ENCODE measurements at regions of chr17 and their contacts with region 1.

Region 1: DNA sequence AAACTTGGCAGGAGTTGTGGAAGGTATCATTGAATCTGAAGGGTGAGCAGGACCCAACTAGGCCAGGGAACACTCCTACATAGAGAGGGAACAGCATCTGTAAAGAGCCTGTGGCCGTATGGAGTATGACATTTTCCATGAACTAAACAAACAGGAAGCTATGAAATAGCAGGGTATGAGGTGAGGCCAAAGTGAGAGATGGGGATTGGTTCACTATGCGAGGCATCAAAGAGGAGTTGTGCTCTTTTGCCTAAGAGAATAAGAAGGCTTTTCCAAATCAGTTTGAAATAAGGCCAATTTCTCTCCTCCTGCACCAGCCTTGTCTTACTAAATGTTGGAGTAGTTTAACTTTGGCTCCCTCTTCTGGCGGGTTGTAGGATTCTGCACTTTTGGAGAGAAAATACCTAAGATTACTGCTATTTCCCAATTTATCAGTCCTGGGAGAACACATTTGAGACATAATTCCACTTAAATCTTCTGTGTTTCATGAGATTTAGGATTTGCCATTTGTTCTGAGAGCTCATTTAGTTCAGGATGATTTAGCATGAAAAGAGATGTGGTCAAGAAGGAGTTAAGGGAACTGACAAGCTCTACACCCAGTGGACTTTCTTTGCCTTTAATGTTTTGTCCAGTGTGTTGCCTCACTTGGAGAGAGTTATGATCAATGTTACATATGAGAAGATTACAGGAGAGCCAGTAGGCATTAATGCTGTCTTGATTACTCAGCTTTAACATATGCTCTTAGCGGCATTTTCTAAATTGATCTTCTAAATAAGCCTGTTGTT is 55.4 kb downstream of the TNRC6C start:
- DNase-seq: peak; percentile 27 to 82 (median 53)
- ATAC-seq: peak; percentile 65
- H3K4me3 ChIP-seq: no peak overlapping the region
- H3K4me3 Mint-ChIP-seq: no peak overlapping the region
- H3K27ac ChIP-seq: peak overlapping the region in 1 of 2 experiments; percentile 30
- H3K27ac Mint-ChIP-seq: peak overlapping the region; percentile 46
- H3K4me1 ChIP-seq: peaks cover 12% of the 10 kb centered on the region
- H3K4me1 Mint-ChIP-seq: peaks cover 36% of the 10 kb centered on the region
- H3K27me3 ChIP-seq: no peaks in the 10 kb centered on the region
- H3K27me3 Mint-ChIP-seq: no peaks in the 10 kb centered on the region
- CTCF ChIP-seq: peak; percentile 82

Region 2: GRCh38 chr17:77542551-77543490 is 471.1 kb before region 1 on chr17:
- CTCF ChIA-PET with region 1: interaction called, 74 read pairs
- POLR2A ChIA-PET with region 1: interaction called, 8 read pairs
- intact Hi-C with region 1: loop called (anchors 1 kb)
- DNase-seq: peak; percentile 32 to 78 (median 63)
- ATAC-seq: peak; percentile 83
- H3K4me3 ChIP-seq: no peak overlapping the region
- H3K4me3 Mint-ChIP-seq: no peak overlapping the region
- H3K27ac ChIP-seq: no peak overlapping the region
- H3K27ac Mint-ChIP-seq: no peak overlapping the region
- H3K4me1 ChIP-seq: no peaks in the 10 kb centered on the region
- H3K4me1 Mint-ChIP-seq: no peaks in the 10 kb centered on the region
- H3K27me3 ChIP-seq: no peaks in the 10 kb centered on the region
- H3K27me3 Mint-ChIP-seq: peaks cover 3% of the 10 kb centered on the region
- CTCF ChIP-seq: peak; percentile 84

Region 3: GRCh38 chr17:77645072-77646045 is 368.5 kb before region 1 on chr17:
- CTCF ChIA-PET with region 1: interaction called, 16 read pairs
- POLR2A ChIA-PET with region 1: no interaction called
- intact Hi-C with region 1: loop called (anchors 1 kb)
- DNase-seq: peak; percentile 26 to 84 (median 72)
- ATAC-seq: peak; percentile 86
- H3K4me3 ChIP-seq: peak overlapping the region; percentile 46 to 48
- H3K4me3 Mint-ChIP-seq: peak overlapping the region; percentile 82
- H3K27ac ChIP-seq: peak overlapping the region; percentile 24 to 33
- H3K27ac Mint-ChIP-seq: peak overlapping the region; percentile 92
- H3K4me1 ChIP-seq: peaks cover 22% of the 10 kb centered on the region
- H3K4me1 Mint-ChIP-seq: peaks cover 24% of the 10 kb centered on the region
- H3K27me3 ChIP-seq: no peaks in the 10 kb centered on the region
- H3K27me3 Mint-ChIP-seq: no peaks in the 10 kb centered on the region
- CTCF ChIP-seq: peak; percentile 54

Region 4: DNA sequence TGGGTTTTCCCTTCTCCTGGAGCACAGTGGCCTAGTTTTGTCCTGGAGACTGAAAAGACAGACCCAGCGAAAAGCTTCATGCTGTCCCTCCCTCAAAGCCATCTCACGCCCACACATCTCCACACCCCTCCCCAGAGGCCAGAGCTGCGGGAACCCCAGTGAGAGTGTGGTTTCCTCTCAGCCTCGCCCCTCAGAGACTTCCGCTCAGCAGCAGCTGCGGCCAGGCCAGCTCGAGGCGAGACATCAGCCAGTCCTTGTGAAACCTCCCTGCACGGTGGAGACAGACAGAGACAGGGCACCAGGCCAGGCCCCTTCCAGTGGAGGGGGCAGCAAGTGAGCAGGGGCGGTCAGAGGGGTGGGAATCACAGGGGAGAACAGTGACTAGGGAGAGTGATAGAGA is 132.3 kb before region 1 on chr17:
- CTCF ChIA-PET with region 1: interaction called, 10 read pairs
- POLR2A ChIA-PET with region 1: no interaction called
- intact Hi-C with region 1: no loop called
- DNase-seq: peak; percentile 57 to 93 (median 76)
- ATAC-seq: peak; percentile 13
- H3K4me3 ChIP-seq: peak overlapping the region; percentile 44
- H3K4me3 Mint-ChIP-seq: peak overlapping the region; percentile 79
- H3K27ac ChIP-seq: peak overlapping the region; percentile 80 to 98
- H3K27ac Mint-ChIP-seq: peak overlapping the region; percentile 98
- H3K4me1 ChIP-seq: peaks cover 83% of the 10 kb centered on the region
- H3K4me1 Mint-ChIP-seq: peaks cover 92% of the 10 kb centered on the region
- H3K27me3 ChIP-seq: no peaks in the 10 kb centered on the region
- H3K27me3 Mint-ChIP-seq: no peaks in the 10 kb centered on the region
- CTCF ChIP-seq: no peak

Region 5: DNA sequence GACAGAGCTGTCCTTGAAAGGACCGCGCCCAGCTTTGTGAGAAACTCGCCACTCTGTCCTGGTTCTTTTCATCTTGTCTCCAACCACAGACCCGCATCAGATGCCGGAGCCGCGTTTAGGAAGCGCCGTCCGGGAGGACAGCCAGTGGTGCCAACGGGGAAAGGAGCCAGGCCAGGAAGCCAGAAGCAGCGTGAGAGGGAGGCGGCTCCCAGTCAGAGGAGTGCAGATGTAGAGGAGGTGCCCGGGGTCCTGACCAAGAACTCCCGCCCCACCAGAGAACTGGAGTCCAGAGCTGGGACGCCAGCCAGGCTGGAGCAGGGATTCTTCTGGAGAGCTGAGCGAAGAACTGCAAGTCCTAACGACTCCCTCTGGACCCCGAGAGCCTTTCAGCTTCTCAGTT is 104.6 kb before region 1 on chr17:
- CTCF ChIA-PET with region 1: no interaction called
- POLR2A ChIA-PET with region 1: no interaction called
- intact Hi-C with region 1: no loop called
- DNase-seq: no peak
- ATAC-seq: no peak
- H3K4me3 ChIP-seq: no peak overlapping the region
- H3K4me3 Mint-ChIP-seq: no peak overlapping the region
- H3K27ac ChIP-seq: no peak overlapping the region
- H3K27ac Mint-ChIP-seq: no peak overlapping the region
- H3K4me1 ChIP-seq: no peaks in the 10 kb centered on the region
- H3K4me1 Mint-ChIP-seq: no peaks in the 10 kb centered on the region
- H3K27me3 ChIP-seq: peaks cover 0 to under 1% of the 10 kb centered on the region in 2 experiments
- H3K27me3 Mint-ChIP-seq: peaks cover 1% of the 10 kb centered on the region
- CTCF ChIP-seq: no peak

Region 6: GRCh38 chr17:77963441-77963840 is 50.4 kb before region 1 on chr17:
- CTCF ChIA-PET with region 1: interaction called, 35 read pairs
- POLR2A ChIA-PET with region 1: interaction called, 24 read pairs
- intact Hi-C with region 1: loop called (anchors 2 kb)
- DNase-seq: peak; percentile 13 to 90 (median 67)
- ATAC-seq: peak; percentile 53
- H3K4me3 ChIP-seq: peak overlapping the region; percentile 2 to 23
- H3K4me3 Mint-ChIP-seq: peak overlapping the region; percentile 71
- H3K27ac ChIP-seq: no peak overlapping the region
- H3K27ac Mint-ChIP-seq: peak overlapping the region; percentile 56
- H3K4me1 ChIP-seq: peaks cover 75% of the 10 kb centered on the region
- H3K4me1 Mint-ChIP-seq: peaks cover 74% of the 10 kb centered on the region
- H3K27me3 ChIP-seq: no peaks in the 10 kb centered on the region
- H3K27me3 Mint-ChIP-seq: no peaks in the 10 kb centered on the region
- CTCF ChIP-seq: no peak

Region 7: GRCh38 chr17:77999413-78000173 is 14.3 kb before region 1 on chr17:
- CTCF ChIA-PET with region 1: interaction called, 41 read pairs
- POLR2A ChIA-PET with region 1: no interaction called
- intact Hi-C with region 1: no loop called
- DNase-seq: no peak
- ATAC-seq: no peak
- H3K4me3 ChIP-seq: no peak overlapping the region
- H3K4me3 Mint-ChIP-seq: no peak overlapping the region
- H3K27ac ChIP-seq: no peak overlapping the region
- H3K27ac Mint-ChIP-seq: peak overlapping the region; percentile 66
- H3K4me1 ChIP-seq: peaks cover 54% of the 10 kb centered on the region
- H3K4me1 Mint-ChIP-seq: peaks cover 86% of the 10 kb centered on the region
- H3K27me3 ChIP-seq: no peaks in the 10 kb centered on the region
- H3K27me3 Mint-ChIP-seq: no peaks in the 10 kb centered on the region
- CTCF ChIP-seq: no peak

Region 8: DNA sequence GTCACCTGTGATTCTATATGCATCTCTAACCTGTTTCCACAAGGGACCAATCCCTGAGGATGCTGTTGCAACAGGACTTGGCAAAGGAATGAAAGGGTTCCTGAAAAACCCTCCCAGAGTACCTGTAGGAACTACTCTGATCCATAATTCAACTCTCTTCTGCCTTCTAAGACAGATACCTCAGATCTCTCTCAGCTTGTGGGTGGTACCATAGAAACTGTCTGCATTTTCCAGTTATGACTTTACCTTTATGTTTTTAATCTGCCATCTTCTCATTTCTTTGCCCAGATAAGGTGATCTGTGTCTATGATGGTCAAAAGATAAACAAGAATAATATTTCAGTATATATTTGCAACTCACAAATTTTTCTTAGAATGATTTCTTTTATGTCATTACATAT is 49.6 kb after region 1 on chr17:
- CTCF ChIA-PET with region 1: interaction called, 15 read pairs
- POLR2A ChIA-PET with region 1: no interaction called
- intact Hi-C with region 1: no loop called
- DNase-seq: no peak
- ATAC-seq: no peak
- H3K4me3 ChIP-seq: no peak overlapping the region
- H3K4me3 Mint-ChIP-seq: no peak overlapping the region
- H3K27ac ChIP-seq: no peak overlapping the region
- H3K27ac Mint-ChIP-seq: peak overlapping the region; percentile 56
- H3K4me1 ChIP-seq: no peaks in the 10 kb centered on the region
- H3K4me1 Mint-ChIP-seq: peaks cover 26% of the 10 kb centered on the region
- H3K27me3 ChIP-seq: no peaks in the 10 kb centered on the region
- H3K27me3 Mint-ChIP-seq: no peaks in the 10 kb centered on the region
- CTCF ChIP-seq: no peak

Measured in CD8-positive, alpha-beta T cell (primary cell).